Activated CD8-positive, alpha-beta memory T cell treated with anti-CD3 and anti-CD28 coated beads, Interleukin-2, amount 10 ng/mL, durations not matched to agents 7 days and 5 days (primary cell): ENCODE measurements at regions of chr1 and their contacts with region 1.

Region 1: GRCh38 chr1:172719694-172720138 is 60.8 kb downstream of the FASLG start:
- DNase-seq: no peak
- ATAC-seq: peak; percentile 73
- H3K4me3 Mint-ChIP-seq: no peak overlapping the region
- H3K27ac Mint-ChIP-seq: peak overlapping the region; percentile 56
- H3K4me1 Mint-ChIP-seq: peaks cover 47% of the 10 kb centered on the region
- H3K27me3 Mint-ChIP-seq: no peaks in the 10 kb centered on the region

Region 2: GRCh38 chr1:172609528-172609927 is 110.2 kb before region 1 on chr1:
- CTCF ChIA-PET with region 1: interaction called, 112 read pairs
- DNase-seq: no peak
- ATAC-seq: peak; percentile 83
- H3K4me3 Mint-ChIP-seq: no peak overlapping the region
- H3K27ac Mint-ChIP-seq: no peak overlapping the region
- H3K4me1 Mint-ChIP-seq: peaks cover 10% of the 10 kb centered on the region
- H3K27me3 Mint-ChIP-seq: no peaks in the 10 kb centered on the region

Region 3: GRCh38 chr1:172627702-172628101 is 92.0 kb before region 1 on chr1:
- CTCF ChIA-PET with region 1: interaction called, 51 read pairs
- DNase-seq: peak; percentile 46
- ATAC-seq: peak; percentile 81
- H3K4me3 Mint-ChIP-seq: no peak overlapping the region
- H3K27ac Mint-ChIP-seq: peak overlapping the region; percentile 50
- H3K4me1 Mint-ChIP-seq: peaks cover 38% of the 10 kb centered on the region
- H3K27me3 Mint-ChIP-seq: no peaks in the 10 kb centered on the region

Region 4: DNA sequence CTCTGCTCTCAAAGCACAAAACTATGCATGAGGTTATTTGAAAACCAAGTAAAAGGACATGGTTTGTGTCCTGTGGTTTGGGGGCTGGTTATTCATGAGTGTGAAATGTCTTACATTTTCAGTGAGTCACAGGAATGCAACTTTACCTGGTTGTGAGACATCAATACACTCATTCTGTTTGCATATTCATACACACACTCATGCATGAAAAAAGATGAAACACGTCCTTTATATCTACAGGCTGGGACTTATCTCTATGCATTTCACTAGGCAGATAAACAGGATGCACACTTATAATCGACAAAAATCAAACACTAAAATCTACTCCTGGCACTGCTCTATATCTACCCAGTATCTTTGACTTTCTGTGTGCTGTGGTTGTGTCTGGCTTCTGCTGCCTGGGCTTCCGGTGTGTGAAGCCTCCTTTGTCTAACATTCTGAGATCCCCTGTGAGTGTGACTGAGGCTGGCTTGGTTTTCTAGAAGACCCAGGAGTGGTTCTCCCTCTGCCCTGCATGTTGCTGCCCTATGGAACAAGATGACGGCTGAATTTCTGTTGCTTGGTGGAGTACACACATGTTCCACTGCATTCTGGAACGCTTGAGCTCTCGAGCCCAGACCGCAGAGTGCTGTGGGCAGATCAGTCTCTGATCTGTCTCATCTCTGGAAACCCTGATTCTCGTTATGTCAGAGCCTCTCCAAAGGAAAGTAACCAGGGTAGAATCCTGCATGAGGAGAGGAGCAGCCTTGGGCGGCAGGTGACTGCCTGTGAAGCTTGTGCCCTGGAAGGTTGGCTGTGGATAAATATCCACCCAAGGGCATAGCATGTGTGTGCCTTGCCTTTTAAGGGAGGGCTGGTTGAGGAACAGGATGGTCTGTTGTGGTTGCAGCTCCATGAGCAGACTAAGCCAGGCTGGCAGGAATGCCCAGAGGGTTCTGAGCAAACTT is 80.6 kb before region 1 on chr1:
- CTCF ChIA-PET with region 1: interaction called, 51 read pairs
- DNase-seq: peak; percentile 94
- ATAC-seq: peak; percentile 81
- H3K4me3 Mint-ChIP-seq: peak overlapping the region; percentile 52
- H3K27ac Mint-ChIP-seq: peak overlapping the region; percentile 91
- H3K4me1 Mint-ChIP-seq: peaks cover 71% of the 10 kb centered on the region
- H3K27me3 Mint-ChIP-seq: peaks cover 10% of the 10 kb centered on the region

Region 5: GRCh38 chr1:172662464-172663109 is 57.1 kb before region 1 on chr1:
- CTCF ChIA-PET with region 1: interaction called, 35 read pairs
- DNase-seq: peak; percentile 97
- ATAC-seq: peak; percentile 81
- H3K4me3 Mint-ChIP-seq: peak overlapping the region; percentile 94
- H3K27ac Mint-ChIP-seq: peak overlapping the region; percentile 96
- H3K4me1 Mint-ChIP-seq: peaks cover 78% of the 10 kb centered on the region
- H3K27me3 Mint-ChIP-seq: no peaks in the 10 kb centered on the region

Region 6: GRCh38 chr1:172671591-172671990 is 48.1 kb before region 1 on chr1:
- CTCF ChIA-PET with region 1: interaction called, 19 read pairs
- DNase-seq: no peak
- ATAC-seq: no peak
- H3K4me3 Mint-ChIP-seq: no peak overlapping the region
- H3K27ac Mint-ChIP-seq: peak overlapping the region; percentile 89
- H3K4me1 Mint-ChIP-seq: peaks cover 84% of the 10 kb centered on the region
- H3K27me3 Mint-ChIP-seq: no peaks in the 10 kb centered on the region

Region 7: GRCh38 chr1:172708452-172708851 is 11.3 kb before region 1 on chr1:
- CTCF ChIA-PET with region 1: interaction called, 23 read pairs
- DNase-seq: peak; percentile 54
- ATAC-seq: peak; percentile 77
- H3K4me3 Mint-ChIP-seq: peak overlapping the region; percentile 1
- H3K27ac Mint-ChIP-seq: peak overlapping the region; percentile 71
- H3K4me1 Mint-ChIP-seq: peaks cover 50% of the 10 kb centered on the region
- H3K27me3 Mint-ChIP-seq: no peaks in the 10 kb centered on the region